ENCODE measurements at regions of chr6 and their contacts with region 1.

Region 1: DNA sequence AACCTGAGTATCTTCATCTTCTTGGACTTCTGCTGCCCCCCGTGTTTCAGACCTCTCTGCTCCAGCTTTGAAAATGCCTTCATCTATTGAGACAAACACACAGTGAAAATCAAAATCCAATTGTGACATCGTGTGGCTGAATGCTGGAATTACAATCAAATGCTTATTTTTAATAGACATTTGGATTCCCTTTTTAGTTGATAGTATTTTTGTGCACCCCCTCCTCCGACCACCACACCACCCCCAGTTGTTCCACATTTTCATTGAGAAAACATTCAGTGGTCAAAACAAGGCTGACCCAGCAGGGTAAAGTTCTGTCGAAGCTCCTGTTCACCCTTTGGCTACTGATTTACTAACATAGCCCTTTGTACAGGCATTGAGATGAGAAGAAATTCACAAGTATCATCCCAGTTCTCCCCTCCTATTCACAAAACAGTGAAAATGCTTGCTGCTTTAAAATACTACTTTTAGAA is 79.0 kb downstream of the NRSN1 start:
- DNase-seq: no peak
- ATAC-seq: no peak
- H3K4me3 ChIP-seq: no peak overlapping the region
- H3K27ac ChIP-seq: no peak overlapping the region
- H3K4me1 ChIP-seq: no peaks in the 10 kb centered on the region
- H3K27me3 ChIP-seq: no peaks in the 10 kb centered on the region
- CTCF ChIP-seq: peak; percentile 41 to 70 (median 57)
- POLR2A ChIP-seq: no peak

Region 2: DNA sequence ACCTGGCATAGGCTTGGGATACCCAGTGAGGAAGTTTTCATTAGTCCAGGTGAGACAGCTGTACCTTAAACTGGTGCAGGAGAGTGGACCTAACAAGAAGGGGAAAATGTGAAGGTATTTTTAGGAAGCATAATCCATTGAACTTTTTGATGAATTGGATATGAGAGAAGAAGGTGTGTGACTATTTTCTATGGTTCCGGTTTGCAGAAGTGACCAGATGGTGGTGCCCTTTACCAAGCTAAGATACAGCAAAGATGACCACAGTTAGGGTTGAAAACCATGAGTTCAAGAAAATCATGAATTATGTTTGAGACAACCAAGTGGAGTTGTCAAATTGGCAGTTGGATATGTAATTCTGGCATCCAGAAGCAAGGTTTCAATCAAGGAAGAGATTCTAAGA is 141.0 kb before region 1 on chr6:
- intact Hi-C with region 1: loop called in 4 of 10 experiments (anchors 10 kb)
- DNase-seq: no peak
- ATAC-seq: no peak
- H3K4me3 ChIP-seq: no peak overlapping the region
- H3K27ac ChIP-seq: no peak overlapping the region
- H3K4me1 ChIP-seq: no peaks in the 10 kb centered on the region
- H3K27me3 ChIP-seq: peaks cover 0 to 4% (median 0%) of the 10 kb centered on the region in 9 donors
- CTCF ChIP-seq: peak in 6 of 12 donors; percentile 16 to 45 (median 32)
- POLR2A ChIP-seq: no peak

Region 3: GRCh38 chr6:25122001-25122400 is 916.9 kb after region 1 on chr6:
- intact Hi-C with region 1: no loop called
- DNase-seq: peak in 4 of 5 donors; percentile 24 to 45 (median 32)
- ATAC-seq: peak in 3 of 4 donors; percentile 64 to 85 (median 78)
- H3K4me3 ChIP-seq: no peak overlapping the region
- H3K27ac ChIP-seq: peak overlapping the region in 11 of 12 donors; percentile 40 to 78 (median 58)
- H3K4me1 ChIP-seq: peaks cover 0 to 72% (median 17%) of the 10 kb centered on the region in 12 donors
- H3K27me3 ChIP-seq: no peaks in the 10 kb centered on the region
- CTCF ChIP-seq: no peak
- POLR2A ChIP-seq: no peak